Endothelial cell of umbilical vein (primary cell): ENCODE measurements at regions of chr16 and their contacts with region 1.

Region 1: DNA sequence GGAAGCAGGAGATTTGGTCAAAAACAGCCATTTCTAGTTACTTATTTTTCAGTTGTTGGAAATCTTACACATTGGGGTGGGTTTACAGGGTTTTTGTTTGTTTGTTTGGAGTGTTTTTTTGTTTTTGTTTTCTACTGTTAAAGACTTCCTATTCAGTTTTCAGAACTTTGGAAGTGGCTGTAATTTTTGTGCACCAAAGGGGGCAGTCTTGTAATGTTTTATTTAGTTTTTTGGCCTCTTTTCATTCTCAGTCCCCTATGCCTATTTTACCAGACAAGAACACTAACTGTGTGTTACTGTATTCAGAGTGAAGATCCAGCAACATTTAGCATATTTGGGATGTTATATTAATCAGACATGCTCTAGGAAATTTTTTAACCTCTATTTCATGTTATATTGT is 20.6 kb downstream of the TPPP3 start:
- DNase-seq: peak; percentile 40
- H3K4me3 ChIP-seq: no peak overlapping the region
- H3K27ac ChIP-seq: no peak overlapping the region
- H3K4me1 ChIP-seq: no peaks in the 10 kb centered on the region
- H3K27me3 ChIP-seq: peaks cover 3 to 17% of the 10 kb centered on the region in 2 experiments
- CTCF ChIP-seq: peak in 1 of 2 donors; percentile 39
- POLR2A ChIP-seq: no peak

Region 2: GRCh38 chr16:67301080-67301782 is 71.4 kb before region 1 on chr16:
- CTCF ChIA-PET with region 1: no interaction called
- POLR2A ChIA-PET with region 1: no interaction called
- dilution Hi-C with region 1: no loop called
- intact Hi-C with region 1: no loop called
- DNase-seq: no peak
- H3K4me3 ChIP-seq: no peak overlapping the region
- H3K27ac ChIP-seq: no peak overlapping the region
- H3K4me1 ChIP-seq: no peaks in the 10 kb centered on the region
- H3K27me3 ChIP-seq: no peaks in the 10 kb centered on the region
- CTCF ChIP-seq: no peak
- POLR2A ChIP-seq: no peak

Region 3: GRCh38 chr16:67384778-67385510 is 12.3 kb after region 1 on chr16:
- CTCF ChIA-PET with region 1: interaction called, 17 read pairs
- POLR2A ChIA-PET with region 1: no interaction called
- dilution Hi-C with region 1: no loop called
- intact Hi-C with region 1: no loop called
- DNase-seq: peak; percentile 85
- H3K4me3 ChIP-seq: no peak overlapping the region
- H3K27ac ChIP-seq: peak overlapping the region; percentile 13
- H3K4me1 ChIP-seq: peaks cover 13% of the 10 kb centered on the region
- H3K27me3 ChIP-seq: no peaks in the 10 kb centered on the region
- CTCF ChIP-seq: no peak
- POLR2A ChIP-seq: no peak